Endothelial cell of umbilical vein (primary cell): ENCODE measurements at regions of chr1 and their contacts with region 1.

Region 1: GRCh38 chr1:223123011-223123610 is 19.9 kb downstream of the TLR5 start:
- DNase-seq: peak; percentile 22
- H3K4me3 ChIP-seq: no peak overlapping the region
- H3K27ac ChIP-seq: no peak overlapping the region
- H3K4me1 ChIP-seq: peaks cover 7% of the 10 kb centered on the region
- H3K27me3 ChIP-seq: no peaks in the 10 kb centered on the region
- CTCF ChIP-seq: no peak
- POLR2A ChIP-seq: no peak

Region 2: GRCh38 chr1:222750651-222751050 is 372.5 kb before region 1 on chr1:
- CTCF ChIA-PET with region 1: interaction called, 15 read pairs
- POLR2A ChIA-PET with region 1: no interaction called
- dilution Hi-C with region 1: no loop called
- intact Hi-C with region 1: no loop called
- DNase-seq: no peak
- H3K4me3 ChIP-seq: no peak overlapping the region
- H3K27ac ChIP-seq: no peak overlapping the region
- H3K4me1 ChIP-seq: no peaks in the 10 kb centered on the region
- H3K27me3 ChIP-seq: peaks cover 2 to 4% of the 10 kb centered on the region in 2 experiments
- CTCF ChIP-seq: no peak
- POLR2A ChIP-seq: no peak

Region 3: DNA sequence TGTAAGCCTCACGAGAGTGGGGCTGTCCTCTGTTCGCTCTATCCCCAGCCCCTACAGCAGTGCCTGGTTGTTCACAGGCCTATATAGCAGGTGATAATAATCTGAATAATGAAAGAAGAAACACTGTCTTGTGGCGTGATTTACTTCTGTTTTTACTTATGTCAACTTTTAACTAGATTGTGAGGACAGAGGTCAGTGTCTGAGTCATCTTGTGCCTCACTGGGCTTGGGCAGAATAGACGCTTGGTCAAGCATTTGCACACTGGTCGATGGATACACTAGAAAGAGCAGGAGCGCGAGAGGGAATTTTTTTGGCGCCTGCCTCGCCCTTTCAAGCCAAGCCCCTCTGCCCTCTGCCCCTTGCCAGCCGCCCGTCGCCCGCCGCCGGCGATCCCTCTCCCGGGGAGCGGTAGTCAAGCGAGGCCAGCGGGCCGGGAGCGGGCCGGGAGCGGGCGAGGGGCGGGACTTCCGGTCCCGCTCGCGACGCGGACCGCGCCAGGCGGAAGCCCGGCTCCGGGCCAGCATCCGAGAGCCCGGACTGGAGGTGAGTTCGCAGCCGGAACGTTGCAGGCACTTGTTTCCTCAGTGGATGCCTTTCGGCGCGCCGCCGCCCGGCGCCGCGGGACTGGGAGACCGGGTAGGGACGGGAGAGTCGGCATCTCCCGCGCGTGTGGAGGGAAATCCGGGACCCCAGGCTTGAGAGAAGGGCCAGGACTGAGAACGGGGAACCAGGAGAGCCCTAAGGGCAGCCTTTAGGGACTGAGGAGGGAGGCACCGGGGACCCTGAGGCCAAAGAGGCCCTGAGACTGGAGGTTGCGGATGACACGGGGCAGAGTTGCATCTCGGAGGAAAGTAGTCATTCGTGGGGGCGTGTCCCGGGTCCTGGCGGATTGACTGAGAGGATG is 308.3 kb before region 1 on chr1 and contains the start of gene DISP1:
- CTCF ChIA-PET with region 1: interaction called, 3 read pairs
- POLR2A ChIA-PET with region 1: no interaction called
- dilution Hi-C with region 1: no loop called
- intact Hi-C with region 1: loop called (anchors 1 kb)
- DNase-seq: peak; percentile 65
- H3K4me3 ChIP-seq: peak within 1 kb of the TSS; percentile 41 to 84 (median 70)
- H3K27ac ChIP-seq: peak within 1 kb of the TSS; percentile 70
- H3K4me1 ChIP-seq: peaks cover 25% of the 10 kb centered on the region
- H3K27me3 ChIP-seq: no peaks in the 10 kb centered on the region
- CTCF ChIP-seq: no peak
- POLR2A ChIP-seq: peak; percentile 44
- total RNA-seq, gene DISP1: 2.4 and 3.9 TPM in 2 replicates

Region 4: DNA sequence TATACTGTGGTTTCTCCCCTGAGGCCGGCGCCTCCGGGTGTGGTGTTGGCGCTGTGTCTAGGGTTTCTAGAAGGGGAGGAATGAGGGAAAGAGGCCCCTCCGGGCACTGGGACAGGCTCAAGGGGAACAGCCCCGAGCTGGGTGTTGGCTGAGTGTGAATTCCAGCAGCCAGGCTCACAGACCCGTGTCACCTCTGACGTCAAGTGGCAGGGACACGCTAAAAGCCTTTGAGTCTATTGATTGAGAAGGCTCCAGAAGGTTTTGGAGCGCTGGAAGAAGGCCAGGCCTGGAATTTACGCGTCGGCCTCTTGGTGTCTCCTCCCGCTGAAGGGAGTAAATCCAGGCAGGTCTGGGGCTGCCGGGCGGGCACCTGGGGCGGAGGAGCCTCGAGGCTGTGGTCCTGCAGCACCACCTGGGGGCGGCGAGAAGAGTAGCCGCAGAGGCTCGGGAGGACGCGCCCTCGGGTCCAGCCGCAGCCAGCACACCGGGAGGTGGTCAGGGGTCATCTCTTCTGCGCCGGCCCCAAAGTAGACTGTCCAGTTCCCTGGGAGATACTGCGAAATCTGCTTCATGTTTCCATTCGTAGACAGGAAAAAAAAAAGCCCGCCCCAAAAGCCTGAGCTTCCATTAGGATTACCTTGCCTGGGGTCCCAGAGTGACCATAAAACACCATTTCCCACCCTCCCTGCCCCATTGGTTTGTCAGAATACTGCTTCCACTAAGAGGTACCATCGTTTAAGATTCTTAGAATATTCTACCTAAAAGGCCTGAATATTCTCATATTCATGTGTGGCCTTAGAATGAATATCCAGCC is 41.7 kb before region 1 on chr1:
- CTCF ChIA-PET with region 1: interaction called, 351 read pairs
- POLR2A ChIA-PET with region 1: no interaction called
- dilution Hi-C with region 1: no loop called
- intact Hi-C with region 1: loop called (anchors 1 kb)
- DNase-seq: peak; percentile 77
- H3K4me3 ChIP-seq: no peak overlapping the region
- H3K27ac ChIP-seq: no peak overlapping the region
- H3K4me1 ChIP-seq: peaks cover 6% of the 10 kb centered on the region
- H3K27me3 ChIP-seq: peaks cover 0 to 1% of the 10 kb centered on the region in 2 experiments
- CTCF ChIP-seq: peak; percentile 91 to 96
- POLR2A ChIP-seq: no peak

Region 5: DNA sequence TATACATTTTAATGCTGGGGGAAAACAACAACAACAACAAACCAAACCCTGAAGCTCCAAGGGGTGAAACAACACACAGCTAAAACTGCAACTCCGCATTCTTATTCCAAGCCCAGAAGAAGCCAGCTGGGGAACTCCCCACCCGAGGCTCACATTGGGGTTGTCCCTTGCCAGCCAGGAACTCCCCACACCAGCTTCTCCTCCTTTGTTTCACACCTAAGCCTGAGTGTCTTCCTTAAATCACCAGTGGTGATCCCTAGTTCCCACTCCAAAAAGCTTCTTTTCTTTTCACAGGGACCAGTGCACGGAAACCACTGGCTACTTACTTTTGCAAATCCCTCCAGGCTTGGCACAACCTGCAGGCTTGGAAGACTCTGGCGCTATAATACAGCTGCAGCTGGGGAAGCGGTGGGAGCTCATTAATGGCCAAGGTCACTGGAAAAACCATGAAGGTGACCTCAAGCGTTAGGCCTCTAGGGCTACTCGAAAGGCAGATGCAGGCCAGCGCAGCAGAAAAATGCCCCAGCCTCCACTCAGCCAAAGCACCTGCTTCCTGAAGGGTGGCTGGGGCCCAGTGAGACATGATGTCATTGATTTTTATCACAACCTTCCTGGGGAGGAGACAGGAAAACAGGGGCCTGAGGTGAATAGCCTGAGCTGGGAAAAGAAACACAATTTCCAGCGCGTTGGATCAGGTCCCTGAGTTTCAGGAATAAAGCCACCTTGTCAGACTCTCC is 20.1 kb before region 1 on chr1:
- CTCF ChIA-PET with region 1: interaction called, 66 read pairs
- POLR2A ChIA-PET with region 1: no interaction called
- dilution Hi-C with region 1: no loop called
- intact Hi-C with region 1: loop called (anchors 1 kb)
- DNase-seq: peak; percentile 98
- H3K4me3 ChIP-seq: peak overlapping the region in 1 of 3 experiments; percentile 9
- H3K27ac ChIP-seq: peak overlapping the region; percentile 75
- H3K4me1 ChIP-seq: peaks cover 26% of the 10 kb centered on the region
- H3K27me3 ChIP-seq: peaks cover 0 to 3% of the 10 kb centered on the region in 2 experiments
- CTCF ChIP-seq: no peak
- POLR2A ChIP-seq: no peak

Region 6: GRCh38 chr1:223153177-223154119 is 30.3 kb after region 1 on chr1:
- CTCF ChIA-PET with region 1: interaction called, 10 read pairs
- POLR2A ChIA-PET with region 1: no interaction called
- dilution Hi-C with region 1: no loop called
- intact Hi-C with region 1: no loop called
- DNase-seq: peak; percentile 72
- H3K4me3 ChIP-seq: no peak overlapping the region
- H3K27ac ChIP-seq: peak overlapping the region; percentile 10
- H3K4me1 ChIP-seq: peaks cover 12% of the 10 kb centered on the region
- H3K27me3 ChIP-seq: peaks cover 0 to 3% of the 10 kb centered on the region in 2 experiments
- CTCF ChIP-seq: no peak
- POLR2A ChIP-seq: no peak

Region 7: GRCh38 chr1:223258741-223259198 is 135.7 kb after region 1 on chr1:
- CTCF ChIA-PET with region 1: no interaction called
- POLR2A ChIA-PET with region 1: no interaction called
- dilution Hi-C with region 1: no loop called
- intact Hi-C with region 1: no loop called
- DNase-seq: no peak
- H3K4me3 ChIP-seq: no peak overlapping the region
- H3K27ac ChIP-seq: no peak overlapping the region
- H3K4me1 ChIP-seq: no peaks in the 10 kb centered on the region
- H3K27me3 ChIP-seq: peaks cover 2 to 3% of the 10 kb centered on the region in 2 experiments
- CTCF ChIP-seq: no peak
- POLR2A ChIP-seq: no peak